Breast epithelium (tissue), 4 donors: ENCODE measurements at regions of chr1 and their contacts with region 1.

Region 1: GRCh38 chr1:67060811-67061218 is 6.9 kb upstream of the SLC35D1 start:
- DNase-seq: no peak
- H3K4me3 ChIP-seq: no peak overlapping the region
- H3K27ac ChIP-seq: no peak overlapping the region
- H3K4me1 ChIP-seq: no peaks in the 10 kb centered on the region
- H3K27me3 ChIP-seq: no peaks in the 10 kb centered on the region
- CTCF ChIP-seq: no peak
- POLR2A ChIP-seq: no peak

Region 2: DNA sequence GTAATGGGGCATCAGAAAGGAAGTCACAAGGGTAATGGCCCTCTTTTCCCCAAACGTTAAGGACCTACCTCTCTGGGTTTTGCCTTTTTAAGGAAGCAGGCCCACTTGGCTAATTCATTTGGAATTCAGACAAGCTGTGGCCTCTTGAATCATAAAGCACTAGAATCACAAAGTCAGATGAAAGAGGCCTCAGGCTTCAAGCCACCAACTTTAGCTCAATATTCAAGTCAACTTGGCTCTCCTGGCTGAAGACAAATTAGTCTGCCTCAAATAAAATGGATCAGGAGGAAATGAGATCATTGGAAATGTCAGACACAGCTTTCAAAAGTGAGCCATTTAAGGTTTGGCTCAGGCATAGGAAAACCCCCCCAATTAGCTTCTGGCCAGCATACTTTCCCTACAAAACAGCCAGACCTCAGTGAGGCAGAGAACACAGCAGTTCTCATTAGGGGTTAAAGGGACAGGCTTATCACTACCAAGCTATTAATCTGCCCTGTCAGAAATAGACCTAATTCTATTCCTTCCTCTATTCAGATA is 41.1 kb before region 1 on chr1:
- intact Hi-C with region 1: loop called (anchors 2 kb)
- DNase-seq: no peak
- H3K4me3 ChIP-seq: no peak overlapping the region
- H3K27ac ChIP-seq: peak overlapping the region; percentile 19 to 20
- H3K4me1 ChIP-seq: no peaks in the 10 kb centered on the region
- H3K27me3 ChIP-seq: no peaks in the 10 kb centered on the region
- CTCF ChIP-seq: no peak
- POLR2A ChIP-seq: no peak

Region 3: DNA sequence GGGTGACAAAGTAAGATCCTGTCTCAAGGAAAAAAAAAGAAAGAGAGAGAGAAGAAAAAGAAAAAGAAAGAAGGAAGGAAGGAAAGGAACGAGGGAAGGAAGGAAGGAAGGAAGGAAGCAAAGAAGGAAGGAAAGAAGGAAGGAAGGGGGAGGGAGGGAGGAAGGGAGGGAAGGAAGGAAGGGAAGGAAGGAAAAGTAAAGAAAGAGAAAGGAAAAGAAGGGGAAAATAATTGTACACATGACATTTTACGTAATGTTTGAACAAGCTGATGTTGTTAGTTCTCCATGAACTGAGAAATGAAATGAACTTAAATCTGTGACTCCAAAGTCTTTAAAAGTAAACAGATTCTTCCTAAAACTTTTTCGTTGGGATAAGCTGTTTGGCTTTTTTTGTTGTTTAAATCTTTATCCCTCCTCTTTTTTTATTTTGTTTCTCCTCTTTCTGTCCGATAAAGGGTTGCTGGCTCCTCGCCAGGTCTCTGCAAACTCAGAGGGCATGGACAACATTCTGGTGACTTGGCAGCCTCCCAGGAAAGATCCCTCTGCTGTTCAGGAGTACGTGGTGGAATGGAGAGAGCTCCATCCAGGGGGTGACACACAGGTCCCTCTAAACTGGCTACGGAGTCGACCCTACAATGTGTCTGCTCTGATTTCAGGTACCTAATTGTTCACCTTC is 306.7 kb after region 1 on chr1:
- intact Hi-C with region 1: no loop called
- DNase-seq: no peak
- H3K4me3 ChIP-seq: no peak overlapping the region
- H3K27ac ChIP-seq: no peak overlapping the region
- H3K4me1 ChIP-seq: no peaks in the 10 kb centered on the region
- H3K27me3 ChIP-seq: no peaks in the 10 kb centered on the region
- CTCF ChIP-seq: no peak
- POLR2A ChIP-seq: no peak